Dendritic cell treated with granulocyte-macrophage colony-stimulating factor and Interleukin-4, amounts not matched to agents 40 ng/mL and 50 ng/mL, for 4 days (primary cell): ENCODE measurements at regions of chr13 and their contacts with region 1.

Region 1: GRCh38 chr13:57624565-57625435 is 6.7 kb upstream of the PCDH17 start:
- H3K4me3 Mint-ChIP-seq: no peak overlapping the region
- H3K27ac Mint-ChIP-seq: no peak overlapping the region
- H3K4me1 Mint-ChIP-seq: peaks cover 6% of the 10 kb centered on the region
- H3K27me3 Mint-ChIP-seq: peaks cover 19% of the 10 kb centered on the region

Region 2: DNA sequence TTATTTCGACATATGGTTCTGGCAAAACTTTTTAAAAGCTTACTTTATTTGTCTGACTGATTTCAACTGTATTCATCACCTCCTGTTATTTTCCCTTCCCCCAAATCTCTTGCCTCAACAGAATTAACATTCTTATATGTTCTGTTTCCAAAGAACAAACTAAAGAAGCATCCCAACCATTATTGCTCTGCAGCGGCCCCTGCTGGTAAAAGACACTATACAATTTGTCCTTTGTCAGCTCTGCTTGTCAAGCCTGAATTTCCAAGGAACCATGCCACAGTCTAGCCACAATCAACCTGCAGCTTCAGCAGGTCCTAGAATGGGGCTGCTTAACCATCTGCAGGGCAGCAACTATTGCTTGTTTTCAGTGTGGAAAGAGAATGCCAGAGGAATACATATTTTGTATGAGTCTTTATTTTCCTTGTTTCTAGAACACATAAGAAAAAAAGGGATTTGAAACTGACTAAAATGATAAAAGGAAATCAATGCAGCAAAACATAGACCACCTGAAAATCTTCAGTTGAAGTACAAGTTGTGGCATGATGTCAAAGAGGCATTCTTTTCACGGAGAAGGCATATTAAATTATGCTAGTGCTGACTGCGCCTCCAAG is 1693.6 kb after region 1 on chr13:
- intact Hi-C with region 1: loop called (anchors 1 kb)
- H3K4me3 Mint-ChIP-seq: no peak overlapping the region
- H3K27ac Mint-ChIP-seq: no peak overlapping the region
- H3K4me1 Mint-ChIP-seq: no peaks in the 10 kb centered on the region
- H3K27me3 Mint-ChIP-seq: no peaks in the 10 kb centered on the region